GM10248 (cell line): ENCODE measurements at regions of chr1 and their contacts with region 1.

Region 1: DNA sequence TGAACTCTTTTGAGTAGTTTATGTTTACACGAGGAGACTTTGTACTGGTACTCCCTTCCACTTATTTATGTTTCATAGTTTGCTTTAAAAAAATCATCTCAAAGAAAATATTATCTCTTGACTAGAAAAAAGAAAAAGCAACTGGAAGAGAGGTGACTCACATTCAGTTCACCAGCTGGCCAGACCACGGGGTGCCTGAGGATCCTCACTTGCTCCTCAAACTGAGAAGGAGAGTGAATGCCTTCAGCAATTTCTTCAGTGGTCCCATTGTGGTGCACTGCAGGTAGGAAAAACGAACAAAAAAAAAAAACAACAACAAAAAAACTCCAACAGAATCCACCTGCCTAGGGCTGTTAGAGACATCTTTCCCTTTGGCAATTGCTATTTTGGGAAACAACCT is 102.9 kb downstream of the PTPRC start:
- DNase-seq: no peak
- CTCF ChIP-seq: no peak

Region 2: DNA sequence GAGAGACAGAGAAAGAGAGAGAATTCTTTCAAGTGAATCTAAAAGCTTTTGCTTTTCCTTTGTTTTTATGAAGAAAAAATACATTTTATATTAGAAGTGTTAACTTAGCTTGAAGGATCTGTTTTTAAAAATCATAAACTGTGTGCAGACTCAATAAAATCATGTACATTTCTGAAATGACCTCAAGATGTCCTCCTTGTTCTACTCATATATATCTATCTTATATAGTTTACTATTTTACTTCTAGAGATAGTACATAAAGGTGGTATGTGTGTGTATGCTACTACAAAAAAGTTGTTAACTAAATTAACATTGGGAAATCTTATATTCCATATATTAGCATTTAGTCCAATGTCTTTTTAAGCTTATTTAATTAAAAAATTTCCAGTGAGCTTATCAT is 14.7 kb after region 1 on chr1:
- CTCF ChIA-PET with region 1: interaction called, 13 read pairs
- POLR2A ChIA-PET with region 1: no interaction called
- DNase-seq: no peak
- CTCF ChIP-seq: no peak